ENCODE measurements at regions of chr18 and their contacts with region 1.

Region 1: GRCh38 chr18:62425465-62426195 is 97.2 kb upstream of the ZCCHC2 start:
- DNase-seq: peak; percentile 78
- ATAC-seq: peak; percentile 69
- H3K4me3 ChIP-seq: no peak overlapping the region
- H3K4me3 Mint-ChIP-seq: peak overlapping the region; percentile 29
- H3K27ac ChIP-seq: no peak overlapping the region
- H3K27ac Mint-ChIP-seq: no peak overlapping the region
- H3K4me1 ChIP-seq: peaks cover 5 to 8% of the 10 kb centered on the region in 2 donors
- H3K4me1 Mint-ChIP-seq: peaks cover 7% of the 10 kb centered on the region
- H3K27me3 ChIP-seq: peaks cover 0 to 3% (median 0%) of the 10 kb centered on the region in 4 experiments
- H3K27me3 Mint-ChIP-seq: peaks cover 9% of the 10 kb centered on the region
- CTCF ChIP-seq: peak; percentile 88

Region 2: GRCh38 chr18:62324917-62325805 is 100.5 kb before region 1 on chr18 and contains the start of gene TNFRSF11A:
- CTCF ChIA-PET with region 1: interaction called, 6 read pairs
- POLR2A ChIA-PET with region 1: no interaction called
- intact Hi-C with region 1: loop called (anchors 2 kb)
- DNase-seq: peak; percentile 71
- ATAC-seq: peak; percentile 95
- H3K4me3 ChIP-seq: peak within 1 kb of the TSS; percentile 41 to 66 (median 59)
- H3K4me3 Mint-ChIP-seq: peak within 1 kb of the TSS; percentile 89
- H3K27ac ChIP-seq: no peak within 1 kb of the TSS
- H3K27ac Mint-ChIP-seq: peak within 1 kb of the TSS; percentile 64
- H3K4me1 ChIP-seq: peaks cover 24 to 27% of the 10 kb centered on the region in 2 donors
- H3K4me1 Mint-ChIP-seq: peaks cover 22% of the 10 kb centered on the region
- H3K27me3 ChIP-seq: peaks cover 0 to 55% (median 41%) of the 10 kb centered on the region in 4 experiments
- H3K27me3 Mint-ChIP-seq: peaks cover 64% of the 10 kb centered on the region
- CTCF ChIP-seq: peak; percentile 45
- total RNA-seq, gene TNFRSF11A: 0.41 and 1.7 TPM in 2 replicates

Region 3: DNA sequence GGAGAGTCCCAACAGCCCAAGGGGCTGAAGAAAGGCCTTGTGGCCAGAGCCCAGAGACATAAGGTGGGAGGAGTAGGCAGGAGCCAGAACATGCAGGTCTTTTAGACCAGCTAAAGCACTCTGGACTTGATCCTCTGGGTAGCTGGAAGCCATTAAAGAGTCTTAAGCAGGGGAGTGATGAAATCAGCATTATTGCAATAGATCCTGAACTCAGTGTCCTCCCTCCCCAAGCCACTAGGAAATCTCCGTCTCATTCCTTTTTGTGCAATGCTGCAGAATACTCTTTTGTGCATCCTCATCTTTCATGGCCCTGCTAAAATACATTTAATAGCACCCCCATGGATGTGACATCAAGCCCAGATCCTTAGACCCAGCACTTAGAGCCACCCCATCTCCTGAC is 38.6 kb after region 1 on chr18:
- CTCF ChIA-PET with region 1: no interaction called
- POLR2A ChIA-PET with region 1: no interaction called
- intact Hi-C with region 1: no loop called
- DNase-seq: no peak
- ATAC-seq: no peak
- H3K4me3 ChIP-seq: no peak overlapping the region
- H3K4me3 Mint-ChIP-seq: no peak overlapping the region
- H3K27ac ChIP-seq: no peak overlapping the region
- H3K27ac Mint-ChIP-seq: no peak overlapping the region
- H3K4me1 ChIP-seq: no peaks in the 10 kb centered on the region
- H3K4me1 Mint-ChIP-seq: no peaks in the 10 kb centered on the region
- H3K27me3 ChIP-seq: no peaks in the 10 kb centered on the region
- H3K27me3 Mint-ChIP-seq: peaks cover 11% of the 10 kb centered on the region
- CTCF ChIP-seq: no peak

Region 4: DNA sequence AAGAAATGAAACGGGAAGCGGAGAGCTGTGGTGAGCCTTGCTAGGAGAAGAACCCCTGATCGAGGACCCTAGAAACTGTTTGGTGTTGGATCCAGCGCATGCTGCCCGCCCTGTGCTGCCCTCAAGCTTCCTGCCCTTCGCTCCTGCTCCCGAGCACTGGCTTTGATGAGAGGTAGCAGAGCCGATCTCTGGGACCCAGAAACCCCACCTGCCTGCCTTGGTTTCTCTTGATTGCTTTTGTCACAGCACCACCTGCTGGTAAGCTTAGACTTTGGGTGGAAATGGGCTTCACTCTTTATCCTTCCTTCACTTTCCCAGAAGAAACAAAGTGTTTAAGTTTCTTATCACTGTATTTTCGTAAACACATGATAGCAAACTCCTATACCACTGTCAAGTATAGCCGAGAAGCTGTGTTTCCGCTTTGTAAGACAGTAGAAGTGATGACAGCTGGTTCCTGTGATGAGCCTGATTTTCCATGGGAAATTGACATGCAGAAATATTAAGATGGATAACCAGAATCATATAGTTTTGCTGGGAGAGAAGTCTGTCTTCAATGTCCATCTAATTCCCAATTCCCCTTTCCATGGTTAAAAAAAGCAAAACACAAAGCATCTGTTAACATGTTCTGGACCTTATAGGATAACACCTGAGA is 557.1 kb after region 1 on chr18:
- CTCF ChIA-PET with region 1: interaction called, 12 read pairs
- POLR2A ChIA-PET with region 1: no interaction called
- intact Hi-C with region 1: loop called (anchors 2 kb)
- DNase-seq: peak; percentile 71
- ATAC-seq: peak; percentile 56
- H3K4me3 ChIP-seq: peak overlapping the region in 3 of 5 experiments; percentile 13 to 16 (median 15)
- H3K4me3 Mint-ChIP-seq: no peak overlapping the region
- H3K27ac ChIP-seq: no peak overlapping the region
- H3K27ac Mint-ChIP-seq: no peak overlapping the region
- H3K4me1 ChIP-seq: peaks cover 3 to 5% of the 10 kb centered on the region in 2 donors
- H3K4me1 Mint-ChIP-seq: peaks cover 6% of the 10 kb centered on the region
- H3K27me3 ChIP-seq: no peaks in the 10 kb centered on the region
- H3K27me3 Mint-ChIP-seq: no peaks in the 10 kb centered on the region
- CTCF ChIP-seq: peak; percentile 80

Measured in B cell (primary cell).